ENCODE measurements at regions of chr2 and their contacts with region 1.

Region 1: GRCh38 chr2:219177552-219178376 is at the start of gene RETREG2:
- DNase-seq: peak; percentile 92 to 95 (median 95)
- H3K4me3 ChIP-seq: peak within 1 kb of the TSS; percentile 74 to 95 (median 75)
- H3K27ac ChIP-seq: peak within 1 kb of the TSS; percentile 62 to 94
- H3K4me1 ChIP-seq: peaks cover 12 to 65% (median 50%) of the 10 kb centered on the region in 4 experiments
- H3K27me3 ChIP-seq: no peaks in the 10 kb centered on the region

Region 2: GRCh38 chr2:219160186-219161017 is 17.4 kb before region 1 on chr2 and contains the start of gene NHEJ1:
- CTCF ChIA-PET with region 1: interaction called, 111 read pairs
- POLR2A ChIA-PET with region 1: no interaction called
- DNase-seq: peak; percentile 90 to 94 (median 94)
- H3K4me3 ChIP-seq: peak within 1 kb of the TSS; percentile 52 to 84 (median 78)
- H3K27ac ChIP-seq: peak within 1 kb of the TSS in 1 of 2 experiments; percentile 73
- H3K4me1 ChIP-seq: peaks cover 0 to 14% (median 13%) of the 10 kb centered on the region in 4 experiments
- H3K27me3 ChIP-seq: no peaks in the 10 kb centered on the region

Region 3: DNA sequence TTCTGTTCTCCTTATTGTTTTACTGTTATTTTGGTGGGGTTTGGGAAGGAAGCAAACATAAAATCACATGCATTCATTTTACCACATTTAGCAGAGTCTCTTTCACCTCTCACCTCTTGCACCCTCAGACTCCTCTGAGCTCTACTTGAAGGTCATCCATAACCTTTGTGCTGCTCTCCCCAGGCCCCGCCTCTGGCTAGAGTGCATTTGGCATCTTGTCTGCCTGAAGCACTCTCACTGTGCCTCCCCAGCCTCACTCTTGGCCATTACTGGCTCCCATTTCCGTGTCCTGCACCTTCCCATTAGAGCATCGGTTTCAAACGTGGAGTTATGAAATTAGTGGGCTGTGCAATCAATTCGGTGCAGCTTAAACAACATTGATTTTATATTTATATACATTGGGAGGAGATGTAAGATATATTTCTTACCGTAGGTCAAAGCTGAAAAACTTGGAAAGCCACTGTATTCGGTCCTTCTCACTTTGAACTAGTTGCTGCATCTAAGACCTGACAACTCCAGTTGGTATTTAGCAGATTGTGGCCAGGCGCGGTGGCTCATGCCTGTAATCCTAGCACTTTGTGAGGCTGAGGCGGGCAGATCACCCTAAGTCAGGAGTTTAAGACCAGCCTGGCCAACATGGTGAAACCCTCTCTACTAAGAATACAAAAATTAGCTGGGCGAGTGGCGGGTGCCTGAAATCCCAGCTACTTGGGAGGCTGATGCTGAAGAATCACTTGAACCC is 21.9 kb after region 1 on chr2:
- CTCF ChIA-PET with region 1: interaction called, 37 read pairs
- POLR2A ChIA-PET with region 1: interaction called, 3 read pairs
- DNase-seq: no peak
- H3K4me3 ChIP-seq: no peak overlapping the region
- H3K27ac ChIP-seq: no peak overlapping the region
- H3K4me1 ChIP-seq: no peaks in the 10 kb centered on the region
- H3K27me3 ChIP-seq: no peaks in the 10 kb centered on the region

Region 4: DNA sequence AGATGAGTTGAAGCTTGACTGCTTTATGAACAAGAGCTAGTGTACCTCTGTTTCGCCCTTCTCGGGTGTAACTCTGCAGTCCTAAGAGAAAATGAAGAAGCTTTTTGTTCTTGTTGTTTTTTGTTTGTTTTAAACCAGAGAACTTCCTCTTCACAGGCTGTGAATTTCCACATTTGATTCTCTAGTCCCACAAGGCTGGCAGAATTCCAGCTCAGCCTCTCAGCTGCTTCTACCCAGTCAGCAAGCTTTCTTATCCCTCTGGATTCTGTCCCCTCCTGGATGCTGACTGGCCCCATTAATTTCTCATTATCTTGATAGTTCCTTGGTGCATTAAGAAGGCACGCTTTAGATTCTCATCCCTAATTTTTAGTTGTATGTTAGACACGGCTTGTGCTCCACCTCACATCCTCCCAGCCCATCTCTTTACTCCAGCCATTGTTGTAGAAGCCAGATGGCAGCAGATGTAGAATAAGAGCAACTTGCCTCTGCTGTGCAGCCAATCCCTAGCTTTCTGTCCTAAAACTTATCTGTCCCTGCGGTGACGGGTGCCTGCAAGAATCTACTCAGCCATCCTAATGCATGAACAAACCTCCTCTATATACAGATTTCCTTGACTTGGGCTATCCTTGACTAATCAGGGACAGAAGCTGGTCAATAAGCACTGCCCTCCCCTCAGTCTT is 167.1 kb after region 1 on chr2:
- CTCF ChIA-PET with region 1: no interaction called
- POLR2A ChIA-PET with region 1: no interaction called
- DNase-seq: peak in 2 of 3 donors; percentile 60 to 69
- H3K4me3 ChIP-seq: no peak overlapping the region
- H3K27ac ChIP-seq: no peak overlapping the region
- H3K4me1 ChIP-seq: no peaks in the 10 kb centered on the region
- H3K27me3 ChIP-seq: peaks cover 0 to 44% (median 9%) of the 10 kb centered on the region in 5 experiments

Region 5: GRCh38 chr2:219684721-219685689 is 507.2 kb after region 1 on chr2:
- CTCF ChIA-PET with region 1: no interaction called
- POLR2A ChIA-PET with region 1: no interaction called
- DNase-seq: peak in 1 of 3 donors; percentile 6
- H3K4me3 ChIP-seq: peak overlapping the region in 4 of 7 experiments; percentile 27 to 67 (median 52)
- H3K27ac ChIP-seq: no peak overlapping the region
- H3K4me1 ChIP-seq: peaks cover 0 to 6% (median 0%) of the 10 kb centered on the region in 4 experiments
- H3K27me3 ChIP-seq: peaks cover 0 to 32% (median 12%) of the 10 kb centered on the region in 5 experiments

Measured in common myeloid progenitor, CD34-positive (primary cell).